Activated CD4-positive, alpha-beta T cell treated with anti-CD3 and anti-CD28 coated beads, Interleukin-2, amount 10 ng/mL, durations not matched to agents 24 days and 14 days (primary cell): ENCODE measurements at regions of chr11 and their contacts with region 1.

Region 1: DNA sequence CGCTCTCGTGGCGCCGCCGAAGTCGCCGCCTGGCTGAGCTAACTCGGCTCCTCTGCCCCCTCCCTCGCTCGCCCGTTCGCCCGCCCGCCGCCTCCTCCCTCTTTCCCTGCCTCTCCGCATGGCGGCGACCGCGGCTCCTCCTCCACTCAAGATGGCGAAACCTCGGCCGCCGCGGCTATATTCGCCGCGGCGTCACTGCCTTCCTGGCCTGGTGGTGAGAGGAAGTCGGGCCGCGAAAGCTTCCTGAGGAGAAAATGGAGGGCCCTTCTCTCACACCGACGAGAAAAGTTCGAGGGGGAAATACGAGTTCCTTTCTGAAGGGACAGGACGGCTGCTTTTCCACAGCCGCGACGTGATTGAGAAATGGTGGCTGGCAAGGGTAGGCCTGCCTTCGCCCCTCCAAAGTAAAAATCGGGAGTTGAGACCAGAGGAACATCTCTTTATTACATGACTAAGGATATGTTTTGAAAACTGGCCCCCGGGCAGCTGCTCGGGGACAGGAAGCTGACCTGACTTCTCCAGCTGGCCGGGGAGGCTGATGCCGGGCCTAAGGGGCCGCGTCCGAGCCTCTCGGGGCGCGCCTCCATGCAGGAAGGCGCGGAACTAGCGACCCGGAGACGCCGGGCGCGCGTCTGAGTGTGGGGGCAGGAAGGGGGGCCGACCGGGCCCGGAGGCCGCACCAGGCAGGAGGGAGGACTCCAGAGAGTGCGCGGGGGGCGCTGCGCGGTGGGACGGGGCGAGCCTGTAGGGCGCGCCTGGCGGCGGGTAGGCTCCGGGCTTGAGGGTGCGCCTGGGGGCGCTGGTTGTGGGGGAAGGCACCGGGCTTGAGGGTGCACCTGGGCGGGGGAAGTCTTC is at the start of gene DDX6:
- DNase-seq: peak; percentile 97
- H3K4me3 Mint-ChIP-seq: peak within 1 kb of the TSS; percentile 96
- H3K27ac Mint-ChIP-seq: peak within 1 kb of the TSS; percentile 96
- H3K4me1 Mint-ChIP-seq: peaks cover 27% of the 10 kb centered on the region
- H3K27me3 Mint-ChIP-seq: no peaks in the 10 kb centered on the region
- total RNA-seq, gene DDX6: 117 TPM in 2 replicates

Region 2: DNA sequence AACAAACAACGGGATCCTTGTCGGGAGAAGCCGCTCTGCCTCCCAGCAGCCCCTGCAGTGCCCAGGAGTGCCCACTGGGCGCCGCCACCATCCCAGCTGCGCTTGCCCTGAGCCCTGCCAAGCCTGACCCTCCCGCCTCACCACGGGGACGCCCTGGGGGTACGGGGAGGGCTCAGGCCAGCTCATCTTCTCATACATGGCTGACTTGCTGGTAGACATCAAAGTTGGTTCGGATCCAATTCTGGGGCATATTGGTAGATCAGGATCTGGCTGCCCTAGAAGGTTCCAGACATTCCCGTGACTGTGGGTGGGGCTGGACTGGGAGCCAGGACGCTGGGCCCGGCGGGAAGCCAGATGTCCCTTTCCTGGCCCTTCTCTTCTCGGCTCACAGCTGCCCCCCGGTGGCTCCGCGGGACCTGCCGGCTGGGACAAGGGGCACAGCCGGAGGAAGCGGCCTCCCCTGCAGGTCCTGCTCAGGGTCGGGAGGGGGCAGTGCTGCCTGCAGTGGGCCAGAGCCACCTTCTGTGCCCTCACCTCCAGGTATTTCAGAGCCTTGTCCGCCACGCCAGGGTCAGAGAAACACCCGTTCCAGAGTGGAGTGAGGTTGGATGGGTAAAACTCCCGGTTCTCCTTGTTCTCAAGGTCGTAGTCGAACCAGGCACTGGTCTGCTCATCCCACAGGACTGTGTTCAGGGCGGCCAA is 101.3 kb before region 1 on chr11:
- intact Hi-C with region 1: loop called (anchors 10 kb)
- DNase-seq: peak; percentile 94
- H3K4me3 Mint-ChIP-seq: peak overlapping the region; percentile 79
- H3K27ac Mint-ChIP-seq: peak overlapping the region; percentile 60
- H3K4me1 Mint-ChIP-seq: peaks cover 27% of the 10 kb centered on the region
- H3K27me3 Mint-ChIP-seq: peaks cover 12% of the 10 kb centered on the region

Region 3: DNA sequence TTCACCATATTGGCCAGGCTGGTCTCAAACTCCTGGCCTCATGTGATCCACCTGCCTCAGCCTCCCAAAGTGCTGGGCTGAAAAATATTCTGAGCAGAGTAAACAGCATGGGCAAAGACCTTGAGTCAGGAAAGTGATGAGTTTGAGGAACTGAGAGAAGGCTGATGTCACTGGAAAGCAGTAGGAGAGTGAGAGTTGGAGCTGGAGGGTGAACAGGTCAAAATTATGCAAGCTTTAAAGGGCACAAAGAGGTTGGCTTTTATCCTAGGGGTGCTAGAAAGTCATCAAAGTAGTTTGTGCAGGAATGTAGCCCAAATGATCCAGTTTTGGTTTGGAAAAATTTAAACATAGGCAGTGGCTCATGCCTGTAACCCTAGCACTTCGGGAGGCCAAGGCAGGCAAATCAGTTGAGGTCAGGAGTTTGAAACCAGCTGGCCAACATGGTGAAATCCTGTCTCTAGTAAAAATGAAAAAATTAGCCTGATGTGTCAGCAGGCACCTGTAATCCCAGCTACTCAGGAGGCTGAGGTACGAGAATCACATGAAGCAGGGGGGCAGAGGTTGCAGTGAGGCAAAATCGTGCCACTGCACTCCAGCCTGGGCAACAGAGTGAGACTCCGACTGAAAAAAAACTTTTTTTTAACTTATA is 47.7 kb after region 1 on chr11:
- intact Hi-C with region 1: loop called (anchors 5 kb)
- DNase-seq: no peak
- H3K4me3 Mint-ChIP-seq: no peak overlapping the region
- H3K27ac Mint-ChIP-seq: peak overlapping the region; percentile 14
- H3K4me1 Mint-ChIP-seq: peaks cover 28% of the 10 kb centered on the region
- H3K27me3 Mint-ChIP-seq: no peaks in the 10 kb centered on the region

Region 4: GRCh38 chr11:118883368-118884071 is 92.2 kb after region 1 on chr11 and contains the start of gene CXCR5:
- intact Hi-C with region 1: loop called (anchors 1 kb)
- DNase-seq: peak; percentile 72
- H3K4me3 Mint-ChIP-seq: peak within 1 kb of the TSS; percentile 66
- H3K27ac Mint-ChIP-seq: peak within 1 kb of the TSS; percentile 83
- H3K4me1 Mint-ChIP-seq: peaks cover 59% of the 10 kb centered on the region
- H3K27me3 Mint-ChIP-seq: no peaks in the 10 kb centered on the region
- total RNA-seq, gene CXCR5: 6.1 and 6.4 TPM in 2 replicates